HCT116 (cell line): ENCODE measurements at regions of chr13 and their contacts with region 1.

Region 1: DNA sequence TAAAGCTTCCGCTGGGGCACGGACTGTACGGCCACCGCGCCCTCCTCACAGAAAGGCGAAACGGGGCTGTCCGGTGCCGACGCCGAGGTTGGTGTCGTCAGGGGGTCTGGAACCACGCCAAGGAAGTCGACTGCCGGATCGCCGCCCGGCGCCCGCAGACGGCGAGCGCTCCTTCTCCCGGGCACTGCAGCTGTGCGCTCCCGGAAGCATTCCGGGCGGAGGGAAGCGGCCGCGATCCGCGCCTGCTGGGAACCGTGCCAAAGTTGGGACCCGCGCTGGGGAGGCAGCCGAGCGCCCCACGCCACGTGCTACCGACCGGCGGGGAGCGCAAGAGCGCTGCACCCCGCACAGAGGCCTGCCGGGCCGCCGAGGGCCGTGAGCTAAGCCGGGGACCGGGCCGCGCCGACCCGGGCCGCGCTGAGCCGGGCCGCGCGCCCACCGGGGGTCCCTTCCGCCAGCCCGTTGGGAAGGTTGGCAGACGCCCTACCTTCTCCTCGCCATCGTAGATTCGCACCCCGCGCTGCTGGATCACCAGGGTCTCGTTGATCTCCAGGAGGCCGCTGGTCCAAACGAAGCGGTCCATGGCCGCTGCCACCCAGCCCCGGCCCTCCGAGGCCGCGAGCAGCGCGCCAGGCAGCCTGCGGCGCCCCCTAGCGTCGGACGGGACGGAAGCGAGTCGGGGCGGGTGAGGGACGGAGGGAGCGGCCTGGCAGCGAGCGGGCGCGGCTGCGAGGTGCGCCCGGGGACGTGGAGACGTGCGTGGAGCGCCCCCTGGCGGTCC is at the start of gene VPS36:
- DNase-seq: peak; percentile 88
- ATAC-seq: peak; percentile 82
- H3K4me3 ChIP-seq: peak within 1 kb of the TSS; percentile 74 to 84
- H3K27ac ChIP-seq: peak within 1 kb of the TSS; percentile 98
- H3K4me1 ChIP-seq: peaks cover 22 to 37% of the 10 kb centered on the region in 2 experiments
- H3K27me3 ChIP-seq: no peaks in the 10 kb centered on the region
- CTCF ChIP-seq: peak in 2 of 3 experiments; percentile 95 to 97; a peak in 4 of 6 replicates
- POLR2A ChIP-seq: no peak
- RAD21 ChIP-seq: no peak
- total RNA-seq, gene VPS36: 34.8 TPM

Region 2: DNA sequence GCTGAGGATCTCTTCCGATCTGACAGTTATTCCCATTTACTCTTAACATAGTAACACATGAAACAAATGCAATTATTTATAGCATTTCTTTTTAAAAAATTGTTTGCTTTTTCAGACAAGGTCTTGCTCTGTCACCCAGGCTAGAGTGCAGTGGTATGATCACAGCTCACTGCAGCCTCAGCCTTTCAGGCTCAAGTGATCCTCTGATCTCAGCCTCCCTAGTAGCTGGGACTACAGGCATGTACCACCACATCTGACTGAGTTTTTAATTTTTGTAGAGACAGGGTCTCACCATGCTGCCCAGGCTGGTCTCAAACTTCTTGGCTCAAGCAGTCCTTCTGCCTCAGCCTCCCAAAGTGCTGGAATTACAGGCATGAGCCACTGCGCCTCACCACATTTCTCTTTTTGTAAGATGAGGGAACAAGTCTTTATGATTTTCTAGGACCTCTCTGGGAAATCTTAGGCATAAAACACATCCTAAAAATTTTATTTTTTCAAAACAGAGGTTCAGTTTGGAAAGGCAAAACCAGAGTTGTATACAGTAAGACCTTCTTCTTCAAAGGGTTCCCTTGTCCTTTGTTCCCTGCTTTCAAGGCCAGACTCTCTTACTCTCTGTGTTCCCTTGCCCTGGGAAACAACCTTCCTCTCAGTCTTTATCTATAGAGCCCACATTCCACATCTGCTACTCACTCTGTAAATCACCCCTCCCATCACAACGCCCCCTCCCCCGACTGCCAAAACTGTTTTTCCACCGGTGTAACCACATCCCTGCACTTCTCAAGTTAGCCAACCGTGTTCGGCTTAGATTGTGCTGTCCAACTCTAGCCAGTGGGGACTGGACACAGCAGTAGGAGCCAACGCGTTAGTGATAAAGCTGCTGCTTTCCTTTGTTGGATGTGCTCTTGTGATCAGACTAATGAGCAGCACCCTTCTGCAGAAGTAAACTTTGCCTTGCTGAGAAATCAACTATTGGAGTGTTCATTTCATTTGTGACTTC is 702.5 kb before region 1 on chr13:
- CTCF ChIA-PET with region 1: no interaction called
- POLR2A ChIA-PET with region 1: no interaction called
- RAD21 ChIA-PET with region 1: no interaction called
- intact Hi-C with region 1: no loop called
- DNase-seq: no peak
- ATAC-seq: no peak
- H3K4me3 ChIP-seq: no peak overlapping the region
- H3K27ac ChIP-seq: no peak overlapping the region
- H3K4me1 ChIP-seq: no peaks in the 10 kb centered on the region
- H3K27me3 ChIP-seq: no peaks in the 10 kb centered on the region
- CTCF ChIP-seq: no peak
- POLR2A ChIP-seq: no peak
- RAD21 ChIP-seq: no peak

Region 3: DNA sequence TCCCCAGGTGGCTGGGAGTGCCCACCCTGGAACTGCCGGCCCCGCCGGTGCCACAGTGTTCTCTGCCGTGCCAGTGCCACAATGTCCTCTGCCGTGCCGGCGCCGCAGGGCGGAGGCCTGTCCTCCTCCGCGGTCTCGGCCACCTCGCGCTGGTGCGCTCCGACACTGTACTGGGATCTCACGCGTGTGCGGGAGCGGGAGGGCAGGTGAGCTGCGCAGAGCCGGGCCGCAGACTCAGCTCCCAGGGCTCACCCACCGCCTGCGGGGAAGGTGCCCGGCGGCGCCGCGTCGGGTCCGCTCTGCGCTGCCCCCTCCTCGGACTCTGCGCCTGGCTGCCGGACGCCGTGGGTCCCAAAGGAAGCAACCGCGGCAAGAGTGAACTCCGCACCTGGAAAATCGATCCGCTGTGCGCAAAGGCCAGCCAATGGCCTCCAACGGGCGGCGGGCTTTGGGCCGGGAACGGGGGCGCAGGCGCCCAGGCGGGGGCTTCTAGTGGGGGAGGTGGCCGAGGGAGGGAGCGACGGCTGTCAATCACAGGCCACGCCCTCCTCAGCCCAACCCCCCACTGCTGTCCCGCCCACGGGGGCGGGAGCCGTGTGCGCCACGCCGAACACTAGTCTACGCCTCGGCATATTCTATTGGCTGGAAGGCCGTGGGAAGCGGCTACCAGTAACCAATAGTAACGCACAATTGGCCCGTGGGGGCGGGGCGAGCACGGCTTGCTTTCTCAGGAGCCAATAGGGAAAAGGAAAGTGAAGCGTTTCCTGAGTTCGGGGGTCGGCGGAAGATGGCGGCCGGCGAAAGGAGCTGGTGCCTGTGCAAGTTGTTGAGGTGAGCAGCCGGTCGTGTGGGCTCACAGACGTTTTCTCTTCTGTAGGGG is 438.3 kb before region 1 on chr13 and contains the start of gene ALG11:
- CTCF ChIA-PET with region 1: interaction called, 4 read pairs
- POLR2A ChIA-PET with region 1: no interaction called
- RAD21 ChIA-PET with region 1: no interaction called
- intact Hi-C with region 1: loop called (anchors 5 kb)
- DNase-seq: peak; percentile 94
- ATAC-seq: peak; percentile 97
- H3K4me3 ChIP-seq: peak within 1 kb of the TSS; percentile 64 to 100
- H3K27ac ChIP-seq: peak within 1 kb of the TSS; percentile 44
- H3K4me1 ChIP-seq: peaks cover 10 to 14% of the 10 kb centered on the region in 2 experiments
- H3K27me3 ChIP-seq: no peaks in the 10 kb centered on the region
- CTCF ChIP-seq: no peak
- POLR2A ChIP-seq: no peak
- RAD21 ChIP-seq: no peak
- total RNA-seq, gene ALG11: 22.6 TPM

Region 4: GRCh38 chr13:52159321-52160086 is 290.7 kb before region 1 on chr13 and contains the start of gene NEK3:
- CTCF ChIA-PET with region 1: no interaction called
- POLR2A ChIA-PET with region 1: no interaction called
- RAD21 ChIA-PET with region 1: no interaction called
- intact Hi-C with region 1: loop called (anchors 10 kb)
- DNase-seq: peak; percentile 47
- ATAC-seq: peak; percentile 78
- H3K4me3 ChIP-seq: peak within 1 kb of the TSS; percentile 54 to 70
- H3K27ac ChIP-seq: peak within 1 kb of the TSS; percentile 49; the same call in 1 of the 2 replicates
- H3K4me1 ChIP-seq: peaks cover 22 to 35% of the 10 kb centered on the region in 2 experiments
- H3K27me3 ChIP-seq: no peaks in the 10 kb centered on the region
- CTCF ChIP-seq: no peak
- POLR2A ChIP-seq: no peak
- RAD21 ChIP-seq: no peak
- total RNA-seq, gene NEK3: 15.7 TPM

Region 5: GRCh38 chr13:52348983-52349780 is 101.0 kb before region 1 on chr13:
- CTCF ChIA-PET with region 1: interaction called, 43 read pairs
- POLR2A ChIA-PET with region 1: interaction called, 12 read pairs
- RAD21 ChIA-PET with region 1: interaction called in 1 of 2 experiments, 5 read pairs
- intact Hi-C with region 1: loop called (anchors 2 kb)
- DNase-seq: peak; percentile 73
- ATAC-seq: peak; percentile 77
- H3K4me3 ChIP-seq: no peak overlapping the region
- H3K27ac ChIP-seq: peak overlapping the region; percentile 39; the same call in 1 of the 2 replicates
- H3K4me1 ChIP-seq: peaks cover 22 to 25% of the 10 kb centered on the region in 2 experiments
- H3K27me3 ChIP-seq: no peaks in the 10 kb centered on the region
- CTCF ChIP-seq: no peak
- POLR2A ChIP-seq: no peak
- RAD21 ChIP-seq: no peak

Region 6: DNA sequence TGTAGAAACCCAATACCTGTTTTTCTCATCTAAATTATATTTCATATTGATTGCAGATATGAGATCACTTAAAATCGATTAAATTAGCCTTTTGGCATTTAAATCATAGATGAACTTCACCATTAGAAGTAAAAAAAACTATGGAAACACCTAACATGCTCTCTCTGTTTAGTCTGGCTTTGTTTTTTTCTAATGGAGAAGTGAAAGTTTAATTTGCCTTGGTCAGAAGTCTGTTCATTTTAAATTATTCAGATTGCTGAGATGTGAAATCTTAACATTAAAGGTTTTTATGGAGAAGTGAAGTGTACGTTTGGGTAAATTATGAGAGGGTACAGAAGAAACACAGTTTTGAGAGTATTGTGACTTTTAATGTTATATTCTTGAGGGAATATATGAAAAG is 209.1 kb after region 1 on chr13:
- CTCF ChIA-PET with region 1: no interaction called
- POLR2A ChIA-PET with region 1: no interaction called
- RAD21 ChIA-PET with region 1: no interaction called
- intact Hi-C with region 1: no loop called
- DNase-seq: no peak
- ATAC-seq: no peak
- H3K4me3 ChIP-seq: no peak overlapping the region
- H3K27ac ChIP-seq: no peak overlapping the region
- H3K4me1 ChIP-seq: 0 out of 4 replicates have a peak, but pooled peaks cover 0 to under 1% of the 10 kb centered on the region in 2 experiments
- H3K27me3 ChIP-seq: no peaks in the 10 kb centered on the region
- CTCF ChIP-seq: no peak
- POLR2A ChIP-seq: no peak
- RAD21 ChIP-seq: no peak